Right ventricle myocardium inferior (tissue), 1 donor: ENCODE measurements at regions of chr1 and their contacts with region 1.

Region 1: GRCh38 chr1:246856371-246856770 is 75.4 kb downstream of the AHCTF1 start:
- DNase-seq: no peak
- ATAC-seq: no peak

Region 2: DNA sequence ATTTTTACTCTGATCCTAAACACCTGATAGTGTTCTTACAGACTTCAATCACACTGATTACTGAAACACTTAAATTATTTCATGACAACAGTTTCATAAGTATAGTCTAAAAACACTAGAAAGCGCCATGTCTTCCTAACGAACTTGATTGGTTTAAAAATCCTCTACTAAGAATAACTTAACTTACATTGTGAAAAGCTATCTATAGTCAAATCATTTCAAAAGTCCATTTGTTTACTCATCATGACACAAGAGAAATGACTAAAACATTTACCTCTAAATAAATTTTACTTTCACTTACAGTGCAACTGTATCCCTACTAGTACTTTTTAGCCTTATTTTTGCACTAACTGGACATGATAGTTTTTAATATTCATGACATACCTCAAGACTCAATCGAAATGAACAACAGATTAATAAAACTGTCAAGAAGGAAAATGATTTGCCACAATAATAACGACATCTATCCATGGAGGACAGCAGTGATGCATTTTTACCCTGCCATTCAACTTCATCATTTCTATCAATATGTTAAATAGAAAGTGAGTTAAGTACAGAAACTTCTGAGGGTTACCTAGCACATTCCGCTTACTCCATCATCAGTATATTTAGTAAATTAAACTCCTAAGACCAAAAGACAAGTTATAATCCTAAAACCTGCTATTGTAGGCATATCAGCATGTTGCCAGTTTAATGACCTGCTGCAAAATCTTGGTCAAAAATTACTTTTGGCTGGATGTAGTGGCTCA is 37.0 kb after region 1 on chr1:
- intact Hi-C with region 1: loop called (anchors 5 kb)
- DNase-seq: no peak
- ATAC-seq: no peak